Ovary (tissue), 10 donors: ENCODE measurements at regions of chr3 and their contacts with region 1.

Region 1: DNA sequence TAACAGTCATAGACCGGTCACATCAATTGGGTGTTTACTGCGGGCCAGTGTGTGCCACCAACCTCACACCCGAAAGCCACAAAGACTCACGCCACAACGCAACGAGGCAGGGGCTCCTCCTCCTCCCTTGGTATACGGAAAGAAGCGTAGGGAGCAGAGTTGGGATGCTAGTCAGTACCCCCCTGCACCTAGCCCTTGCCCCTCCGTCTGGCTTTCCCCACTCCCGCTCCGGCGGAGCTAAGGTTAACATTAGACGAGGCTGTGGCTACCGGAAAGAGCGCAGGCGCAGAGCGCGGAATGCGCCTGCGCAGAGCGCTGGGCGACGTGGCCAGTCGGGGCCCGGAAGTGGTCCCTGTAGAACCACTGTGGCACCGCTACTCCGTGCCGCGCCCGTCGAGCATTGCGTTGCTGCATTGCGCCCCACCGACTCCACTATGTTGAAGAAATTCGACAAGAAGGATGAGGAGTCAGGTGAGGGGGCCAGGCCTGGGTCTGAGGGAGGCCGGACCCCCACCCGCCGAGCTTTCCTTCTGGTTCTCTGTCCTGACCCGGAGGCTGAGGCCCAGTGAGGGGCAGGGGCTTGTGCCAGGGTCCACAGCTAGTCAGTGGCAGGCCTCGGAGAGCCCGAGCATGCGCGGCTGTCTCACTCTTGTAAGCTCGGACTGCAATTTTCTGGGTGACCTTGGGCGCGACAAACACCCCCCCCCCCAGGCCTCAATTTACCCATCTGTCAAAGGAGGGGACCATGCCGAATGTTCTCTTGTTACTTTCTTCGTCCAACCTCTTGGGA is at the start of gene COPG1:
- DNase-seq: peak; percentile 81 to 93 (median 86)
- H3K4me3 ChIP-seq: peak within 1 kb of the TSS; percentile 81
- H3K27ac ChIP-seq: peak within 1 kb of the TSS; percentile 62 to 72
- H3K4me1 ChIP-seq: peaks cover 9% of the 10 kb centered on the region
- H3K27me3 ChIP-seq: no peaks in the 10 kb centered on the region
- CTCF ChIP-seq: peak in 1 of 3 donors; percentile 9
- EP300 ChIP-seq: no peak
- POLR2A ChIP-seq: peak; percentile 92
- total RNA-seq, gene COPG1: 49.2 to 147 (median 115) TPM

Region 2: DNA sequence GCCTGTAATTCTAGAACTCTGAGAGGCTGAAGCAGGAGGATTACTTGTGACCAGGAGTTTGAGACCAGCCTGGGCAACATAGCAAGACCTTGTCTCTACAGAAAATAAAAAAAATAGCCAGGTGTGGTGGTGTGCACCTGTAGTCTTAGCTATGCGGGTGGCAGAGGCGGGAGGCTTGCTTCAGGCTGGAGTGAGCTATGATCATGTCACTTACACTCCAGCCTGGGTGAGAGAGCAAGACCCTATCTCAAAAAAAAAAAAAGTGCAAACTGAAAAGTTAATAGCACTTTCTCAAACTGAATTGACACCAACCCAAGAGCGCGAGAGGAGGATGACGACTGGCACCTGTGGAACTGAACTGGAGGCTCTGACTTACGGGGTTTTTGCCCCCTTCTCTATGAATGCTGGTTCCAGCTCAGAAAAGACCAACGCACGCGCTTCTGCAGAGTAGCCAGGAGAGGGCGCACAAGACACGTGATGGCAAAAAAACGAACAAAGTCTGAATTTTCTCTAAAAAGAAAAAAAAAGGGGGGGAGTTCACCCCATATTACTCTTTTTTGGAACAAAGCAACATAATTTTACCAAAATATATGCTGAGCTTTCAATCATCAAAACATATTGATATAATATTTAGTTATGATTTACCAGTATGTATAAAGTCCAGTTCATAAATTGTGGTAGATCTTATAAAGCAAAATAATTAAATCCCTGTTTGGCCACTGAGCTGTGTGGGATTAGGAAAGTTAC is 279.3 kb before region 1 on chr3:
- intact Hi-C with region 1: loop called in 3 of 4 experiments (anchors 5 kb)
- DNase-seq: peak in 4 of 5 donors; percentile 57 to 66 (median 58)
- H3K4me3 ChIP-seq: no peak overlapping the region
- H3K27ac ChIP-seq: no peak overlapping the region
- H3K4me1 ChIP-seq: no peaks in the 10 kb centered on the region
- H3K27me3 ChIP-seq: no peaks in the 10 kb centered on the region
- CTCF ChIP-seq: peak; percentile 74 to 88 (median 78)
- EP300 ChIP-seq: no peak
- POLR2A ChIP-seq: no peak

Region 3: GRCh38 chr3:128993461-128994173 is 255.9 kb before region 1 on chr3 and contains the start of gene CFAP92:
- intact Hi-C with region 1: loop called in 1 of 4 experiments (anchors 10 kb)
- DNase-seq: peak; percentile 88 to 94 (median 92)
- H3K4me3 ChIP-seq: peak within 1 kb of the TSS; percentile 43
- H3K27ac ChIP-seq: no peak within 1 kb of the TSS
- H3K4me1 ChIP-seq: peaks cover 7% of the 10 kb centered on the region
- H3K27me3 ChIP-seq: no peaks in the 10 kb centered on the region
- CTCF ChIP-seq: no peak
- EP300 ChIP-seq: no peak
- POLR2A ChIP-seq: no peak
- total RNA-seq, gene CFAP92: 0.89 to 3.5 (median 1.4) TPM

Region 4: GRCh38 chr3:129052675-129053074 is 196.8 kb before region 1 on chr3:
- intact Hi-C with region 1: loop called in 2 of 4 experiments (anchors 5 kb)
- DNase-seq: peak; percentile 38 to 69 (median 57)
- H3K4me3 ChIP-seq: no peak overlapping the region
- H3K27ac ChIP-seq: peak overlapping the region in 1 of 2 donors; percentile 56
- H3K4me1 ChIP-seq: peaks cover 11% of the 10 kb centered on the region
- H3K27me3 ChIP-seq: no peaks in the 10 kb centered on the region
- CTCF ChIP-seq: no peak
- EP300 ChIP-seq: no peak
- POLR2A ChIP-seq: no peak

Region 5: GRCh38 chr3:129058441-129059200 is 190.8 kb before region 1 on chr3:
- intact Hi-C with region 1: loop called in 2 of 4 experiments (anchors 5 kb)
- DNase-seq: no peak
- H3K4me3 ChIP-seq: no peak overlapping the region
- H3K27ac ChIP-seq: peak overlapping the region in 1 of 2 donors; percentile 19
- H3K4me1 ChIP-seq: peaks cover 8% of the 10 kb centered on the region
- H3K27me3 ChIP-seq: no peaks in the 10 kb centered on the region
- CTCF ChIP-seq: no peak
- EP300 ChIP-seq: no peak
- POLR2A ChIP-seq: no peak

Region 6: DNA sequence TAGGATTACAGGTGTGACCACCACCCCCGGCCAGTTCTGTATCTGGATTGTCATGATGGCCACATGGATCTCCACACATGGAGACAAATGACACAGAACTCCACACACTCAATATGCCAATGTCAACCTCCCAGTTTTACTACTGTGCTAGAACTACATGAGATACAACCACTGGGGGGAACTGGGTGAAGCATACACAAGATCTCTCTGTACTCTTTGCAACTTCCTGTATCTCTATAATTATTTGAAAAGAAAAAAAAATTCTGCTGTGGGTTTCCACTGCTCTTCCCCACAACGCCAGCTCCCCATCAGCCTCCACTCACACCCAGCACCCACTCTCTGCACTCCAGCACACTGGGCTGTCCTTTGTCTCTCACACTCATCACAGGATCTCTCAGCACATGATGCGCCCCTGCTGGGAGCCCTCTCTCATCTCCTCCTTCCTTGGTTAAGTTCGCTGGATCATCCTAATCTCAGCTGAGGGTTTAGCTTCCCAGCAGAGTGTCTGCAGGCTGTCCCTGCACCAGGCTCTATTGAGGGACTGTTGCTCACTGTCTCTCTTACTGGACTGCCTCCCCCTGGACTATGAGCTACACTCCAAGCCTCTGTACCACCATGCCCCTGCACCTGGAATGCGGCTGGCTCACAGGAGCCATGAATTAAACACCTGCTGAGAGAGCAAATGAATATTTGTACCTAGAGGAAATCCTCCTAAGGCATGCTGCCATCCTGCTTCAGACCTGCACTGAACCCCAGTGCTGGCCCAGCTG is 117.2 kb before region 1 on chr3:
- intact Hi-C with region 1: no loop called
- DNase-seq: no peak
- H3K4me3 ChIP-seq: no peak overlapping the region
- H3K27ac ChIP-seq: no peak overlapping the region
- H3K4me1 ChIP-seq: no peaks in the 10 kb centered on the region
- H3K27me3 ChIP-seq: no peaks in the 10 kb centered on the region
- CTCF ChIP-seq: no peak
- EP300 ChIP-seq: no peak
- POLR2A ChIP-seq: no peak

Region 7: GRCh38 chr3:129352045-129352444 is 102.6 kb after region 1 on chr3:
- intact Hi-C with region 1: no loop called
- DNase-seq: no peak
- H3K4me3 ChIP-seq: no peak overlapping the region
- H3K27ac ChIP-seq: no peak overlapping the region
- H3K4me1 ChIP-seq: no peaks in the 10 kb centered on the region
- H3K27me3 ChIP-seq: no peaks in the 10 kb centered on the region
- CTCF ChIP-seq: no peak
- EP300 ChIP-seq: no peak
- POLR2A ChIP-seq: no peak